ENCODE measurements at regions of chr2 and their contacts with region 1.

Region 1: GRCh38 chr2:628651-629050 is 48.6 kb downstream of the TMEM18 start:
- DNase-seq: no peak

Region 2: DNA sequence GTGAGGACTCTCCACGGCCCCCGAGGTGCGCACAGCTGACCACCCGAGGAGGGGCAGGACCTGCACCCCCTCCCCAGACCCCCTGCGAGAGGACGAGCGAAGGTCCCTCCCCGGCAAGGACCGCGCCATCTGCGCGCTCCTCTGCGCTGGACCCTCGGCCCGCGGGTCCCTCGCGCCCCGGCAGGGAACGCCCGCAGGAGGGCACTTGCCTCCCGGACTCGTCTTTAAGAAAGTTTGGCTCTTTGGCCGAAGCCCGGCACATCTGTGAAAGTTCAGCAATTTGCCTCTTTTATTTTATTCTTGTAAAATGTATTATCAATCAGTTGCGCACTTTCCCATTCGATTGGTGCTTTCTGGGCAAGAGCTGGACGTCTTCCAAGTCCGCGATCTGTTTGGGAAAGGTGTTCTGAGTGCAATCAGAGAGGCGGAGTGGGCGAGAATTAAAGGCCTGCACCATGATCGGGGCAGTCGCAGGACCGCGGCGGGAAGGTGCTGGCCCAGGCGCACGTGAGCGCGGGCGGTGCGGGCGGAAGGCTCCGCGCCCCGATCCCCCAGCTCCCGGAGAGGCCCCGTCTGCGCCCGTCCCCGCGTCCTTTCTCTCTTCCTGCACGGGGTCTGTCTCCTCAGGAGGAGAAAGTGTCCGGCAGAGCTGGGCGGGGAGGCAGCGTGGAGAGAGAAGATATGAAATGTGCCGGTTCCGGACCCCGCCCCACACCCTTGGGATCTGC is 339.1 kb before region 1 on chr2:
- intact Hi-C with region 1: loop called in 1 of 2 experiments (anchors 1 kb)
- DNase-seq: peak; percentile 84

Region 3: GRCh38 chr2:692767-693166 is 64.1 kb after region 1 on chr2:
- intact Hi-C with region 1: no loop called
- DNase-seq: no peak

Measured in posterior vena cava (tissue), 2 donors.